AG04449 (cell line): ENCODE measurements at regions of chr6 and their contacts with region 1.

Region 1: GRCh38 chr6:88982720-88983119 is 19.3 kb upstream of the RNGTT start:
- DNase-seq: peak; percentile 26
- H3K4me3 ChIP-seq: no peak overlapping the region
- CTCF ChIP-seq: peak; percentile 48

Region 2: GRCh38 chr6:88761237-88762031 is 221.3 kb before region 1 on chr6:
- CTCF ChIA-PET with region 1: no interaction called
- POLR2A ChIA-PET with region 1: no interaction called
- DNase-seq: no peak
- H3K4me3 ChIP-seq: no peak overlapping the region
- CTCF ChIP-seq: no peak

Region 3: GRCh38 chr6:88992741-88993552 is 10.2 kb after region 1 on chr6:
- CTCF ChIA-PET with region 1: interaction called, 10 read pairs
- POLR2A ChIA-PET with region 1: no interaction called
- DNase-seq: no peak
- H3K4me3 ChIP-seq: no peak overlapping the region
- CTCF ChIP-seq: no peak

Region 4: GRCh38 chr6:89084954-89085353 is 102.2 kb after region 1 on chr6:
- CTCF ChIA-PET with region 1: interaction called, 13 read pairs
- POLR2A ChIA-PET with region 1: interaction called, 3 read pairs
- DNase-seq: no peak
- H3K4me3 ChIP-seq: no peak overlapping the region
- CTCF ChIP-seq: no peak

Region 5: DNA sequence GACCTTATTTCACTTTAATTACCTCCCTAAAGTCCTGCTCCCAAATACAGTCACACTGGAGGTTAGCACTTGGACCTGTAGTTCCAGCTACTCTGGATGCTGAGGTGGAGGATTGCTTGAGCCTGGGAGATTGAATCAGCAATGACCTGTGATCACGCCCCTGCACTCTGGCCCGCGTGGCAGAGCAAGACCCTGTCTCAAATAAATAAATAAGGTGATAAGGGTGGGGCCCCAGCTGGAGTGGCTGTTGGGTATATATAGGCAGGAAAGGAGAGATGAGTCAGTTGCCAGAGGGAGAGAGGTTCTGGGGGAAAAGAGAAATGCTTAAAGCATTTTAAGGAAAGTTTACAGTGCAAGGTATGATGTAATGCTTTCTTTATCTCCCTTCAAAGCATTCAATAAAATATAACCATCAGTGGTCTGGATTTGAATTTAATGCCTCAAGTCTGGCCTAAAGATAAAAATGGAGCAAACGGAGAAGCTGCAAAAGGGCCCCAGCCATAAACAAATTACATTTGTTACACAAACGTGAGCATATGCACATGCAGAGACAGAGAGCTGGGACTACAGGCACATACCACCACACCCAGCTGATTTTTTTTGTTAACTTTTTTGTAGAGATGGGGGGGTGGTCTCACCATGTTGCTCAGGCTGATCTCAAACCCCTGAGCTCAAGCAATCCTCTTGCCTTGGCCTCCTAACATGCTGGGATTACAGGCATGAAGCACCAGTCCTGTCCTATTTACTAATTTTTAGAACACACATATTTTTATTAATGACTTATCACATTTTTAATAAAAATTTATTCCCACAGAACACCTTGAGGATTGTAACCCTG is 157.0 kb after region 1 on chr6:
- CTCF ChIA-PET with region 1: interaction called, 12 read pairs
- POLR2A ChIA-PET with region 1: no interaction called
- DNase-seq: no peak
- H3K4me3 ChIP-seq: no peak overlapping the region
- CTCF ChIP-seq: no peak

Region 6: GRCh38 chr6:89360415-89360999 is 377.8 kb after region 1 on chr6:
- CTCF ChIA-PET with region 1: interaction called, 11 read pairs
- POLR2A ChIA-PET with region 1: no interaction called
- DNase-seq: peak; percentile 17
- H3K4me3 ChIP-seq: no peak overlapping the region
- CTCF ChIP-seq: no peak